ENCODE measurements at regions of chr22 and their contacts with region 1.

Region 1: DNA sequence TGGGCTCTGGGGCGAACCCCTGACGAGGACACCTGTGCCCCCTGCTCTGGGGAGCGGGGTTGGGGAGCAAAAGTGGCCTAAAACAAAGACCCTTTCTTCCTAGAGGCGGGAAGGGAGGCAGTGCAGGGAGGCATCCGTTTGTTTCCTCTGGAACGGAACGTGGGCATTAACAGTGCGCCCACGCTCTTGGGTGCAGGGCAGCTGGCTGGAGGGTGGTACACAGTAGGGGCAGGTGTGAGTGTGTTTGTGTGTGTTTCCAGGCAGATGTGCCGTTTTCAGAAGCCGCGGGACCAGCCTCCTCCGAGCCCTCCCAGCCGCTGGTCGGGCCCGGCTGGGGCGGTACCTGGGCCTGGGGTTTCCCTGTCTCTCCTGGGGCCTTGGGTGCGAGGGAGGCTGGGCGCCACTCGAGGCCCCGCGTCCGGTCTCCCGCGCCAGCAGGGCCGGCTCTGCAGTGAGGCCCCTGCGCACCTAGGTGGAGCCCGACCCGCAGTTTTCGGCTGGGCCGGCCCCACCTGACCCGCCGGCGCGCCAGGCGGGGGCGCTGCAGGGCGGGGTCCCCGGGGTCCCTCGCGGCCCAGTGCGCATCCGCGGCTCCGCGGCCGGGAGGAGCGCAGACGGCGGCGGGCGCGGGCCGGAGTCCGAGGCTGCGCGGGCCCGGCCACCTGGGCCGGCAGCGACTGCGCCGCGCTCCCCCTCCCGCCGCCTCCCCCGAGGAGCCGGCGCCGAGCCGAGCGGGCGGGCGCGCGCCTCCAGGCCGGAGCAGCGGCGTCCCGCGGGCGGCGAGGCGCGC is 1252.7 kb downstream of the BRD1 start:
- DNase-seq: peak; percentile 12
- H3K4me3 ChIP-seq: no peak overlapping the region
- H3K27ac ChIP-seq: no peak overlapping the region
- H3K4me1 ChIP-seq: no peaks in the 10 kb centered on the region
- H3K27me3 ChIP-seq: peaks cover 47% of the 10 kb centered on the region
- CTCF ChIP-seq: peak in 3 of 5 experiments; percentile 8 to 32 (median 24)
- EP300 ChIP-seq: no peak
- POLR2A ChIP-seq: no peak

Region 2: GRCh38 chr22:48333261-48333763 is 241.7 kb before region 1 on chr22:
- in situ Hi-C with region 1: no loop called
- intact Hi-C with region 1: no loop called
- DNase-seq: no peak
- H3K4me3 ChIP-seq: no peak overlapping the region
- H3K27ac ChIP-seq: no peak overlapping the region
- H3K4me1 ChIP-seq: no peaks in the 10 kb centered on the region
- H3K27me3 ChIP-seq: no peaks in the 10 kb centered on the region
- CTCF ChIP-seq: no peak
- EP300 ChIP-seq: no peak
- POLR2A ChIP-seq: no peak

Region 3: GRCh38 chr22:49305214-49305909 is 730.4 kb after region 1 on chr22:
- in situ Hi-C with region 1: no loop called
- intact Hi-C with region 1: loop called (anchors 10 kb)
- DNase-seq: peak; percentile 53
- H3K4me3 ChIP-seq: no peak overlapping the region
- H3K27ac ChIP-seq: no peak overlapping the region
- H3K4me1 ChIP-seq: peaks cover 0 to 4% (median 0%) of the 10 kb centered on the region in 4 donors
- H3K27me3 ChIP-seq: peaks cover 32% of the 10 kb centered on the region
- CTCF ChIP-seq: peak; percentile 67 to 94 (median 85)
- EP300 ChIP-seq: no peak
- POLR2A ChIP-seq: no peak

Measured in transverse colon (tissue), 4 donors.